ENCODE measurements at regions of chr10 and their contacts with region 1.

Region 1: DNA sequence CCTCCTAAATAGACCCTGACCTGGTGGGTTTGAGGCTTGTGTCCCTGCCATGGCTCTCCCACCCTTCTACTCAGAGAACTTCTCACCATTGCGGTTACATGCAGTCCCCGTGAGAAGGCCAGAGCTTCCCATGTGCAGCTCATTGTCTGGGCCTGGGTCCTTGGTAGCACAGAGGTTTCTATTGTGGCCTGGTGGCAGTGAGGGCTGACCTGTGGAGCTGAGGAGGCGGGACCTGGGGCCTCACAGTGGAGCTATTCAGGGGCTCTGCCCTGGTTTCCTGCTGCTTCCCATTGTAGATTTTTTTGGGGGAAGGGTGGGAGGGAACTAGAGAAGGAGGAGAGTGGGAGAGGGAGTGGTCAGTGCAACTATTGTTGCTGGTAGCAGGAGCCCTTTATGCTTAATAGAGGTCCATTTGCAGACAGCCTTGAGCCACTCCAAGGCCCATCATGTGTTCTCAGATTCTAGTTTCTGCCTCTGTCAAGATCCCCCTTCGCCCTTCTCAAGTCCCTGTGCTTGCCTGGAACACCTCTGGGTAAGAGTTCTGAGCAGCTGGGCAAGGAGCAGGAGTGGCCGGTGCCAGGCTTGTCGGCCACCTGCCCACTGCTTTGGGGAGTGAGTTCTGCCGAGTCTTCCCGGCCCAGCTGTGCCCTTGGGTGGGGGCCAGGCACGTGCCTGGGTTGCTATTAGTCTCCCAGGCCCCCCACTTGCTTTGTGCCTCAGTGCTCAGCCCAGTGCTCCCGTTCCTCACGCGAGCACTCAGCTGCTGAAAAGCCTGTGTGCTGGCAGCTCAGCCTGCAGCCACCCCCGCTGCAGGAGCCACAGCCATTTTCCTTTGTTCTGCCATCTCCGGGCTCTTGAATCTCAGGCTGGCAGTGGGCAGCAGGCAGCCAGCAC is 10.7 kb downstream of the TSPAN14 start:
- DNase-seq: no peak
- H3K4me3 ChIP-seq: peak overlapping the region; percentile 48 to 58
- H3K4me3 Mint-ChIP-seq: peak overlapping the region; percentile 83 to 100 (median 96)
- H3K27ac ChIP-seq: peak overlapping the region; percentile 83
- H3K27ac Mint-ChIP-seq: peak overlapping the region; percentile 93 to 100 (median 96)
- H3K4me1 ChIP-seq: peaks cover 100% of the 10 kb centered on the region
- H3K4me1 Mint-ChIP-seq: peaks cover 79 to 100% (median 93%) of the 10 kb centered on the region in 4 donors
- H3K27me3 ChIP-seq: no peaks in the 10 kb centered on the region
- H3K27me3 Mint-ChIP-seq: no peaks in the 10 kb centered on the region

Region 2: DNA sequence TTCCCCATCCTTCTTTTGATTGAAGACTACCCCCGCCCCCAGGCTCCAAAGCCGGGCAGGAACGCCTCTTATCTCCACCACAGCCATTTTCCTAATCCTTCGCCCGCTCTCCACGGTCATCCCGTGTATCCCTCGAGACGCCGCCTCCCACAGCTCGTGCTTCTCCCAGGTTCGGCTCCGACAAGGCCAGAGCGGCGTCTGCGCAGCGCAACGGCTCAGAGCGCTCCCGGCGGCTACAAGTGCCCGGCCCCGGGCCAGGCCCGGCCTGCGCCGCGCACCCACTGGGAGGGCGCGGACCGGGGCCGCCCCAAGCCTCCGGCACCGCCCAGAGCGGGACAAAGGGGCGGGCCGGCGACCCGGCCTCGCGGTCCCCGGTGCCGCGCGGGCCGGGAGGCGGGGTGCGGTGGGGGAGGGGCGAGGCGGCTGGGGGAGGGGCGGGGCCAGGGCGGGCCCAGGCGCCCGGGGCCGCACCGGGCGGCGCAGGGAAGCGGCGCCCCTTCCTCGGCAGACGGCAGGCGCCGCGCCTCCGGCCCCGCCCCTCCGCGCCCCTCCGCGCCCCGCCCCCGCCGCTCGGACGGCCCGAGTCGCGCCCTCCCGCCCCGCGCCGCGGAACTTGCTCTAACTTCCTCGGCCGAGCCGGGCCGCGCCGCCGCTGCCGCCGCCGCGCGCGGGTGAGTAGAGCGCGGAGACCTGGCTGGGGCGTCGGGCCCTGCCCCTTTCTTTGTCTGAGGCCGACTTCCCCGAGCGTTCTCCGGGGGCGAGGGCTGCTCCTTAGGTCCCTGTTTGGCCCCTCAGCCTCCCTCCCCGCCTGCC is 10.9 kb before region 1 on chr10 and contains the start of gene TSPAN14:
- CTCF ChIA-PET with region 1: interaction called, 237 read pairs
- POLR2A ChIA-PET with region 1: interaction called, 598 read pairs
- intact Hi-C with region 1: loop called (anchors 1 kb)
- DNase-seq: peak; percentile 66 to 76 (median 73)
- H3K4me3 ChIP-seq: peak within 1 kb of the TSS; percentile 70 to 76
- H3K4me3 Mint-ChIP-seq: peak within 1 kb of the TSS; percentile 90 to 100 (median 98)
- H3K27ac ChIP-seq: peak within 1 kb of the TSS; percentile 83
- H3K27ac Mint-ChIP-seq: peak within 1 kb of the TSS; percentile 93 to 100 (median 96)
- H3K4me1 ChIP-seq: peaks cover 31% of the 10 kb centered on the region
- H3K4me1 Mint-ChIP-seq: peaks cover 29 to 53% (median 35%) of the 10 kb centered on the region in 4 donors
- H3K27me3 ChIP-seq: no peaks in the 10 kb centered on the region
- H3K27me3 Mint-ChIP-seq: no peaks in the 10 kb centered on the region
- total RNA-seq, gene TSPAN14: 151 to 153 TPM

Region 3: GRCh38 chr10:80477813-80478212 is 13.0 kb after region 1 on chr10:
- CTCF ChIA-PET with region 1: interaction called, 74 read pairs
- POLR2A ChIA-PET with region 1: interaction called, 906 read pairs
- intact Hi-C with region 1: no loop called
- DNase-seq: peak in 1 of 5 donors; percentile 47
- H3K4me3 ChIP-seq: no peak overlapping the region
- H3K4me3 Mint-ChIP-seq: peak overlapping the region in 4 of 8 donors; percentile 7 to 68 (median 54)
- H3K27ac ChIP-seq: no peak overlapping the region
- H3K27ac Mint-ChIP-seq: peak overlapping the region; percentile 61 to 91 (median 76)
- H3K4me1 ChIP-seq: peaks cover 79% of the 10 kb centered on the region
- H3K4me1 Mint-ChIP-seq: peaks cover 51 to 82% (median 69%) of the 10 kb centered on the region in 4 donors
- H3K27me3 ChIP-seq: no peaks in the 10 kb centered on the region
- H3K27me3 Mint-ChIP-seq: no peaks in the 10 kb centered on the region

Region 4: GRCh38 chr10:82027711-82028110 is 1562.9 kb after region 1 on chr10:
- CTCF ChIA-PET with region 1: no interaction called
- POLR2A ChIA-PET with region 1: no interaction called
- intact Hi-C with region 1: no loop called
- DNase-seq: no peak
- H3K4me3 ChIP-seq: no peak overlapping the region
- H3K4me3 Mint-ChIP-seq: no peak overlapping the region
- H3K27ac ChIP-seq: no peak overlapping the region
- H3K27ac Mint-ChIP-seq: no peak overlapping the region
- H3K4me1 ChIP-seq: no peaks in the 10 kb centered on the region
- H3K4me1 Mint-ChIP-seq: no peaks in the 10 kb centered on the region
- H3K27me3 ChIP-seq: no peaks in the 10 kb centered on the region
- H3K27me3 Mint-ChIP-seq: no peaks in the 10 kb centered on the region

Measured in CD4-positive, alpha-beta memory T cell (primary cell).